ENCODE measurements at regions of chr22 and their contacts with region 1.

Region 1: GRCh38 chr22:23281406-23282088 is 101.2 kb downstream of the BCR start:
- DNase-seq: peak; percentile 87
- H3K4me3 Mint-ChIP-seq: no peak overlapping the region
- H3K27ac Mint-ChIP-seq: no peak overlapping the region
- H3K4me1 Mint-ChIP-seq: peaks cover 35% of the 10 kb centered on the region
- H3K27me3 Mint-ChIP-seq: no peaks in the 10 kb centered on the region

Region 2: DNA sequence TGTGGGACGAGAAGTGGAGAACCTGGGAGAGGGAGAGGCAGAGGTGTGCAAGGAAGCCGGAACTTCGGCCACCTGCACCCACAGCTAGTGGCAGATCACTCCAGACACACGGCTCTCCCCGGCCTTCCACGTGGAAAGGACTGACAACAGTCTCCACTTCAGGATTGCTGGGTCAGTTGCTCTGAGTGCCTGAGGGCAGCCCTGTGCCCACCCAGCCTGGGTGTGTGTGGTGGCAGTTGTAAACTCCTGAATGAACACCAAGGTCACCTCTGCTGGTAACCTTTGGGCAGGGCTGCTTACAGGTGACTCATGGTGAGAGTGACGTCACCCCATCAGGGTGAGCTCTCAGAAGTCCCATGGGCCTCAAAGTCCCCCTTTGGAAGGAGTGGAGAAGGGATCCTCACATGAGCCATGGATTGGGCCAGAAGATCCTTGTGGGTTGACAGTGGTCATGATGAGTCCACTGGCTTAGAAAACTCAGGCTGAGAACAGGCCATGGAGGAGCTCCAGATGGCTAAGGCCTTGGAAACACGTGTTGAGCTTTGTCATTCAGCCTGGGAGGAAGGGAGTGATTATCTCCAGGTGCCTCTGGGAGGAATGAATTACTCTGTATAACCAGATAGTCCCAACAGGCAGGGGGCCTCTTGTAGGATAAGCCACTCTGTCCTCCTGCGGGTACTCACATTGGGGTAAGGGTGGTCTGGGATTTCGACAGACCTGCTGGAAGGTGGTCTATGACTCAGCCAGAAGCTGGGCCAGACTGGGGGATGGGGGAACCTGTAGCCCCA is 29.9 kb before region 1 on chr22:
- CTCF ChIA-PET with region 1: interaction called, 12 read pairs
- POLR2A ChIA-PET with region 1: no interaction called
- intact Hi-C with region 1: no loop called
- DNase-seq: peak; percentile 54
- H3K4me3 Mint-ChIP-seq: no peak overlapping the region
- H3K27ac Mint-ChIP-seq: peak overlapping the region; percentile 13
- H3K4me1 Mint-ChIP-seq: peaks cover 51% of the 10 kb centered on the region
- H3K27me3 Mint-ChIP-seq: no peaks in the 10 kb centered on the region

Region 3: DNA sequence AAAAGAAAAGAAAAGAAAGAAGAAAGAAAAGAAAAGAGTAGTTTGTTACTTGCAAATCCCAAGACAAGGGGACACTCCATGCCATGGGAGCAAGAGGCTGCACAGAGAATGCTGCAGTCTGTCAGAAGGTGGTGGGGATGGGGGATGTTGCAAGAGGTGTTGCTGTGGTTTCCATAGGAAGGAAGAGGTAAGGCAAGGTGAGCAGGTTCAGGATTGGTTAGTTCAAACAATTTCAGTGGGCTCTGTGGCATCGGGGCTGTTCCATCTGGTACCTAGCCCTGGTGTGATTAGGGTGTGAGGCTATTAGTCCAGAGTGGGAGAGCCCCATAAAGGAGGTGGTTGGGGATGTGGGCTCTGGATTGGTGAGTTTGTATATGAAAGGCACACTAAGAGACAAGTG is 71.5 kb after region 1 on chr22:
- CTCF ChIA-PET with region 1: no interaction called
- POLR2A ChIA-PET with region 1: no interaction called
- intact Hi-C with region 1: no loop called
- DNase-seq: no peak
- H3K4me3 Mint-ChIP-seq: no peak overlapping the region
- H3K27ac Mint-ChIP-seq: no peak overlapping the region
- H3K4me1 Mint-ChIP-seq: no peaks in the 10 kb centered on the region
- H3K27me3 Mint-ChIP-seq: peaks cover 21% of the 10 kb centered on the region

Region 4: DNA sequence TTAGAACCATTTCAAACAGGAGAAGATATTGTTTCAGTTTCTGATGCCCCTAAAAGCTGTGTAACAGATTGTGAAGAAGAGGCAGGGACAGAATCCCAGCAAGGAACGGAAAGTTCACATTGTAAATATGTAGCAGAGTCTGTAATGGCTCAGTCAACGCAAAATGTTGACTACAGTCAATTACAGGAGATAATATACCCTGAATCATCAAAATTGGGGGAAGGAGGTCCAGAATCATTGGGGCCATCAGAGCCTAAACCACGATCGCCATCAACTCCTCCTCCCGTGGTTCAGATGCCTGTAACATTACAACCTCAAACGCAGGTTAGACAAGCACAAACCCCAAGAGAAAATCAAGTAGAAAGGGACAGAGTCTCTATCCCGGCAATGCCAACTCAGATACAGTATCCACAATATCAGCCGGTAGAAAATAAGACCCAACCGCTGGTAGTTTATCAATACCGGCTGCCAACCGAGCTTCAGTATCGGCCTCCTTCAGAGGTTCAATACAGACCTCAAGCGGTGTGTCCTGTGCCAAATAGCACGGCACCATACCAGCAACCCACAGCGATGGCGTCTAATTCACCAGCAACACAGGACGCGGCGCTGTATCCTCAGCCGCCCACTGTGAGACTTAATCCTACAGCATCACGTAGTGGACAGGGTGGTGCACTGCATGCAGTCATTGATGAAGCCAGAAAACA is 257.7 kb after region 1 on chr22:
- CTCF ChIA-PET with region 1: no interaction called
- POLR2A ChIA-PET with region 1: no interaction called
- intact Hi-C with region 1: no loop called
- DNase-seq: peak; percentile 87
- H3K4me3 Mint-ChIP-seq: no peak overlapping the region
- H3K27ac Mint-ChIP-seq: no peak overlapping the region
- H3K4me1 Mint-ChIP-seq: peaks cover 9% of the 10 kb centered on the region
- H3K27me3 Mint-ChIP-seq: peaks cover 4% of the 10 kb centered on the region